Caco-2 (cell line): ENCODE measurements at regions of chr6 and their contacts with region 1.

Region 1: GRCh38 chr6:29942275-29943052 is at the start of gene HLA-A:
- DNase-seq: peak; percentile 85 to 89
- H3K4me3 ChIP-seq: peak within 1 kb of the TSS; percentile 65
- H3K4me3 Mint-ChIP-seq: peak within 1 kb of the TSS; percentile 81
- H3K27ac Mint-ChIP-seq: peak within 1 kb of the TSS; percentile 91
- H3K4me1 ChIP-seq: no peaks in the 10 kb centered on the region
- H3K4me1 Mint-ChIP-seq: peaks cover 7% of the 10 kb centered on the region
- H3K27me3 ChIP-seq: no peaks in the 10 kb centered on the region
- H3K27me3 Mint-ChIP-seq: no peaks in the 10 kb centered on the region
- CTCF ChIP-seq: no peak
- total RNA-seq, gene HLA-A: 192 and 198 TPM in 2 replicates

Region 2: DNA sequence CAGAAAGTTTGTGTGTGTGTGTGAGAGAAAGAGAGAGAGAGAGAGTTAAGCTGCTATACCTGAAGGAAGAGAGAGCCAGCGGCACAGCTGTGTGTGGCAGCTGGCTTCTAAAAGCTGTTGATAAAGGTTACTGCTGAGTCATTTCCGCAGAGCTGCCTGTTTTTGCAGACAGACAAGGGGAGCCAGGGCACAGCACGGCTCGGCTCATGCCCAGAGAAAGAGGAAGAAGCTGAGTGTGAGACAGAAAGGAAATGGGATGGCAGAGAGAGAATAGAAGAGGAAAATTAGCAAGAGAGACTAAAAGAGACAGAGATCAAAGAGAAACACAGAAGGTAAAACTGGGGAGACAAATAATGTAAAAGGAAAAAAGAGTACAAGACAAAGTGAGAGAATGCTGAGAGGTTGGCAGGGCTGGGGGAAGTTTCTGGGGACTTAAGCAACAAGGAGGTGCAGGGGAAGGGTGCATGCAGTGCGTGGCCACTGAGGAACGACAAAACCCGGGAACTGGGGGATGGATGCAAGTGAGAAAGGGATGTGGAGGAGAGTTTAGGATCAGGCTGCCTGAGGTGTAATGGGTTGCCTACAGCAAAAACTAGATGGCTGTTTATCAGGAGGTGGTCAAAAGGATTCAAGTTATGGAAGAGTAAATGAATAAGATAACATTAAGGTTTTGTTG is 22.6 kb after region 1 on chr6:
- CTCF ChIA-PET with region 1: no interaction called
- POLR2A ChIA-PET with region 1: no interaction called
- intact Hi-C with region 1: loop called (anchors 1 kb)
- DNase-seq: peak; percentile 58 to 77
- H3K4me3 ChIP-seq: peak overlapping the region; percentile 16
- H3K4me3 Mint-ChIP-seq: peak overlapping the region; percentile 71
- H3K27ac Mint-ChIP-seq: peak overlapping the region; percentile 89
- H3K4me1 ChIP-seq: peaks cover 35% of the 10 kb centered on the region
- H3K4me1 Mint-ChIP-seq: peaks cover 21% of the 10 kb centered on the region
- H3K27me3 ChIP-seq: no peaks in the 10 kb centered on the region
- H3K27me3 Mint-ChIP-seq: no peaks in the 10 kb centered on the region
- CTCF ChIP-seq: no peak

Region 3: GRCh38 chr6:30258204-30258603 is 315.7 kb after region 1 on chr6:
- CTCF ChIA-PET with region 1: no interaction called
- POLR2A ChIA-PET with region 1: no interaction called
- intact Hi-C with region 1: no loop called
- DNase-seq: no peak
- H3K4me3 ChIP-seq: no peak overlapping the region
- H3K4me3 Mint-ChIP-seq: no peak overlapping the region
- H3K27ac Mint-ChIP-seq: no peak overlapping the region
- H3K4me1 ChIP-seq: peaks cover 8% of the 10 kb centered on the region
- H3K4me1 Mint-ChIP-seq: no peaks in the 10 kb centered on the region
- H3K27me3 ChIP-seq: no peaks in the 10 kb centered on the region
- H3K27me3 Mint-ChIP-seq: peaks cover 12% of the 10 kb centered on the region
- CTCF ChIP-seq: no peak